ENCODE measurements at regions of chr3 and their contacts with region 1.

Region 1: DNA sequence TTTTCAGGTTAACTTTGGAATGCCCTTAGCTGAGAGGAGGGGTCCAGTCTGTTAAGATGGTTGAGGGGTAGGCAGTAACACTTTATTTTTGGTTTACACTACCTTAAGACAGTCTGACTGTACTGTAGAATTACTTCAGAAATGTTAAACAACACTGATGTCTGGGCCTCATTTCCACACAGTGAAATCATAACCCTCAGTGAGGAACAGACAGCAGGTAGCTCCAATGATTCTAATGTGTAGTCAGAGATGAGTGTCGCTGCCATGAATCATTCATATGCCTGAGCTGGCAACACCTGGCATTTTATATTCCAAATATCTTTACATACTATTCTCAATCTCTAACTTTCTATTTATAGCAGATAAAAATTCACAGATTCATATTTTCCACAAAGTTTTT is 37.3 kb upstream of the POU1F1 start:
- DNase-seq: peak; percentile 16
- H3K4me3 Mint-ChIP-seq: no peak overlapping the region
- H3K27ac Mint-ChIP-seq: no peak overlapping the region
- H3K4me1 Mint-ChIP-seq: peaks cover 18% of the 10 kb centered on the region
- H3K27me3 Mint-ChIP-seq: peaks cover 3% of the 10 kb centered on the region

Region 2: DNA sequence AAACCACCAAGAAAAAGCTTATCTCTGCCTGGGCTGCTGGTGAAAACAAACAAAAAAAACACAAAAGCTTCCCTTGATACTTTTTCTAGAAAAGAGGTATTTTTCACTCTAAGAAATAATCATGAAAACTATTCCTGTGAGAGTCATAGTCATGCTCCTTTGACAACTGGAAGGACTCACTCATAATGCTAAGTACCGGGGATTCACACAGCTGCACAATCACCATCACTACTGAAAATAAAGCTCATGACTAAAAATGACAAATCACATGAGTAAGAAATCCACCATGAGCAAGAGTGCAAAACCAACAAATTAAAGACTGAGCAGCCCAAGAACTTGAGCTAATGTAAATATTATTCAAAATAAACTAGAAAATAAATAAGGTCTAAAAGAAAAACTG is 26.6 kb before region 1 on chr3:
- CTCF ChIA-PET with region 1: no interaction called
- intact Hi-C with region 1: loop called (anchors 1 kb)
- DNase-seq: no peak
- H3K4me3 Mint-ChIP-seq: no peak overlapping the region
- H3K27ac Mint-ChIP-seq: no peak overlapping the region
- H3K4me1 Mint-ChIP-seq: peaks cover 4% of the 10 kb centered on the region
- H3K27me3 Mint-ChIP-seq: no peaks in the 10 kb centered on the region

Region 3: DNA sequence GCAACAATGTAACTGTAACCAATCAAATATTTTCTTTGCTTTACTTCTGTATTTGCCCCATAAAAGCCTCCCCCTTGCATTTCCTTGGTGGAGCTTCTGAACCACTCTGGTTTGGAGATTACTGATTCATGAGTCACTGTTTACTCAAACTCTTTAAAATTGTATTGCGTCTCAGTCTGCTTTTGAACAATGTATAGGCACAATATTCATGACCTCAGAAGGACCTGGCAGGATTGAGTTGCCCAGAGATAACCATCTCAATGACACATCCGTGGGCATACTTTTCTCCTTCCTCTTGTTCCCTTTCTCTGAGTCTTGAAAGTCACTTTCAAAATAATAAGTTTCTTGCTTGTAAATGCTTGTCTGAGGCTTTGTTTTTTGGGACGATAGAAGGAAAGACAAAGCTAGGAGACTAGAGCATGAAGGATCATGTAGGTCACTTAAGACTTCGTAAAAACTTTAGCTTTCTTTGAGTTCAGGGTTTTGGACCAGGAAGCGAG is 19.8 kb after region 1 on chr3:
- CTCF ChIA-PET with region 1: interaction called, 5 read pairs
- intact Hi-C with region 1: loop called (anchors 1 kb)
- DNase-seq: peak; percentile 49
- H3K4me3 Mint-ChIP-seq: no peak overlapping the region
- H3K27ac Mint-ChIP-seq: peak overlapping the region; percentile 82
- H3K4me1 Mint-ChIP-seq: peaks cover 17% of the 10 kb centered on the region
- H3K27me3 Mint-ChIP-seq: peaks cover 5% of the 10 kb centered on the region

Measured in activated naive CD4-positive, alpha-beta T cell treated with anti-CD3 and anti-CD28 coated beads for 36 hours (primary cell).